Psoas muscle (tissue), 8 donors: ENCODE measurements at regions of chr11 and their contacts with region 1.

Region 1: GRCh38 chr11:22957786-22958185 is 97.5 kb upstream of the CCDC179 start:
- DNase-seq: no peak
- ATAC-seq: no peak
- H3K4me3 ChIP-seq: no peak overlapping the region
- H3K27ac ChIP-seq: no peak overlapping the region
- H3K4me1 ChIP-seq: no peaks in the 10 kb centered on the region
- H3K27me3 ChIP-seq: no peaks in the 10 kb centered on the region
- CTCF ChIP-seq: no peak

Region 2: GRCh38 chr11:23010790-23011335 is 53.1 kb after region 1 on chr11:
- intact Hi-C with region 1: loop called in 1 of 2 experiments (anchors 10 kb)
- DNase-seq: no peak
- ATAC-seq: no peak
- H3K4me3 ChIP-seq: no peak overlapping the region
- H3K27ac ChIP-seq: no peak overlapping the region
- H3K4me1 ChIP-seq: no peaks in the 10 kb centered on the region
- H3K27me3 ChIP-seq: no peaks in the 10 kb centered on the region
- CTCF ChIP-seq: no peak